Ascending aorta (tissue), 2 donors: ENCODE measurements at regions of chr7 and their contacts with region 1.

Region 1: GRCh38 chr7:70693686-70694360 is 438.1 kb upstream of the GALNT17 start:
- DNase-seq: peak in 1 of 2 donors; percentile 88
- H3K4me3 ChIP-seq: peak overlapping the region; percentile 92 to 98
- H3K27ac ChIP-seq: peak overlapping the region; percentile 77 to 97
- H3K4me1 ChIP-seq: peaks cover 5 to 12% of the 10 kb centered on the region in 2 donors
- H3K27me3 ChIP-seq: no peaks in the 10 kb centered on the region
- CTCF ChIP-seq: peak in 1 of 3 experiments; percentile 15

Region 2: DNA sequence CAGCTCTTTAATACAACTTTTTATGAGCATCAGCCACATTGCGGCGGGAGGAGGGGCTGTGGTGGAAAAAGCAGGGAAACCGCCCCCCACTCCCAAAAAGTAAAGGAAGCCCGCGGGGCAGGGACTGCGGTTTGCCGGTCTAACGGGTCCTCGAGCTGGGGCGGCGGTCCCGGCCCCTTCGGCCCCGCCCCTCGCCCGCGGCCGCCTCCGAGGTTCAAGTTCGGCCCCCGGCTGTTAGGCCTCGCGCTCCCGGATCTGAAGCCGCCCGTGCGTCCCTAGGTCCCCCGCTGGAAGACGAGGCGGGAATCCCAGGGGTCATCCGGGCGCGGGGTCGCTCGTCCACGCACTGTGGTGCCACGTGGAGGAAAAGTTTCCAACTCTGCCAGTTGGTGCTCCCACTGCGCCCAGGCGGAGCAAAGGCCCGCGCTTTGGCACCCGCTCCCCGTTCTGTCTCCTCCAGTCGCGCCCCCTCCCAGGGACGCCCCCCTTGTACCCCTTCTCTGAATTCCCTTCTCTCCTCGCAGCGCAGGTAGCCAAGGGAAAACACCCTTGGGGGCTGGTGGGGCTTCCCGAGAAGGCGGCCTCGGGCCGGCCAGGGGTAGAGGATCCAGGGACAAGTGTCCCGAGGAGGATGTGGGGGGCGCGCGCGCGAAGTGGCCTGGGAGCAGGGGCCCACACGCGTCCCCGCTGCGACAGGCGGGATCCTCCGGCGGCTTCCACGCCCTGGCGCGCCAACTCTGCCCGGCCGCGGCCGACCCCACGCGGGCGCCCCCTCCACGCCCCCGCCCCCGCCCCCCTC is 1096.3 kb before region 1 on chr7:
- intact Hi-C with region 1: loop called (anchors 2 kb)
- DNase-seq: peak in 1 of 2 donors; percentile 75
- H3K4me3 ChIP-seq: peak overlapping the region; percentile 80 to 85
- H3K27ac ChIP-seq: peak overlapping the region; percentile 84 to 93
- H3K4me1 ChIP-seq: peaks cover 9 to 13% of the 10 kb centered on the region in 2 donors
- H3K27me3 ChIP-seq: no peaks in the 10 kb centered on the region
- CTCF ChIP-seq: no peak

Region 3: GRCh38 chr7:70092314-70093204 is 601.3 kb before region 1 on chr7:
- intact Hi-C with region 1: loop called (anchors 10 kb)
- DNase-seq: no peak
- H3K4me3 ChIP-seq: no peak overlapping the region
- H3K27ac ChIP-seq: no peak overlapping the region
- H3K4me1 ChIP-seq: no peaks in the 10 kb centered on the region
- H3K27me3 ChIP-seq: no peaks in the 10 kb centered on the region
- CTCF ChIP-seq: no peak

Region 4: DNA sequence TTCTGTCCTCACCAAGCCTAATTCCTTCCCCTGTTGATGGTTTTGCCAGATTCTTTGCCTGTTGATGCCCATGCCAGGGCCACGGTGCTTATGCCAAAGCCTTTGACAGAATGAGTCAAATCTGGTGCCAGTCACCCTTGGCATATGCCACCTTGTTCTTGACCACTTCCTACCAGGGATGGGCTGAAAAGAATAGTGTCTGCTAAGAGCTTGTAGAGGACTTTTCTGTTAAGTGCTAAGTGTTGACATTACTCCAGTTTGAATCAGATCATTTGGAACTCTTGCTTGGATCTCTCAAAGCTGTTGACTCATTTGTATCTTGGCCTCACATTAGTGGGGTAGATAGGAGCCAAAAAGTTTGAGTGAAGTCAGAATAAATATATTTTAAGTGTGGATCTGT is 434.3 kb before region 1 on chr7:
- intact Hi-C with region 1: loop called (anchors 10 kb)
- DNase-seq: peak in 1 of 2 donors; percentile 65
- H3K4me3 ChIP-seq: no peak overlapping the region
- H3K27ac ChIP-seq: peak overlapping the region in 1 of 2 donors; percentile 56
- H3K4me1 ChIP-seq: peaks cover 3 to 4% of the 10 kb centered on the region in 2 donors
- H3K27me3 ChIP-seq: no peaks in the 10 kb centered on the region
- CTCF ChIP-seq: no peak

Region 5: GRCh38 chr7:70392256-70392876 is 301.5 kb before region 1 on chr7:
- intact Hi-C with region 1: loop called (anchors 2 kb)
- DNase-seq: no peak
- H3K4me3 ChIP-seq: peak overlapping the region in 1 of 2 donors; percentile 13
- H3K27ac ChIP-seq: peak overlapping the region; percentile 88 to 89
- H3K4me1 ChIP-seq: peaks cover 3 to 47% of the 10 kb centered on the region in 2 donors
- H3K27me3 ChIP-seq: no peaks in the 10 kb centered on the region
- CTCF ChIP-seq: no peak

Region 6: DNA sequence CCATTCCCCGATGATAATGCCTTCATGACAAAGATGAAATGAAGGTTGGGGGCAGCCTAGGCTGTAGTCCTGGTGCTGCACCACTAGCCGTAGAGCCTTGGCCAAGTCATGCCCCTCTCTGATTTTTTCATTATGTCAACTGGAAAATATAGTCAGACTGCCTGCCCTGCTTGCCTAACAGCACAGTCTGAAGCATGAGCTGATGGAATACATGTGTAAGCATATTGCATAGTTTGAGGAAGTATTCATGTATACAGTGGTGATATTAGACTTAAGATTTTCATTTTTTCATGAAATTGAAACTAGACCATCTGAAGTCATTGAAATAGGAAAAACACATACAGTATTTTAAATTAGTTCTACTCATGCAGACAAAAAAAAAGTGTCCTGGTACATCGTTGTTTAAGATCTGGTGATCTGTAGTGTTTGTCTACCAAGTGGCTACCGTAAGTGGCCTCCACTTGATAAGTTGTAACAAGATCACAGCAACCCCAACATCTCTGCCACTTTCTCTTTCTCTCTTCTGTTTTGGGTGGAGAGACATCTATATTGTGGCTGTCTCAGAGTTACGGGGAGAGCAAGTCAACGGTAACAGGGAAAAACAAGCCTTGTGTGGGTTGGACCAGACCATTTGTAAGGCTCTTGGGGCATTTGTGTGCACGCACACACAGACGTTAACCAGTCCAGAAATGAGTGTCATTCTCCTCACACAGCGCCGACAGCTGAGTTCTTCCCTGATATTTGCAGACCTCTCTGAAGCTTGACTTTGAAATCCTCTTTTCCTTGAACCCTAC is 278.4 kb before region 1 on chr7:
- intact Hi-C with region 1: no loop called
- DNase-seq: no peak
- H3K4me3 ChIP-seq: no peak overlapping the region
- H3K27ac ChIP-seq: no peak overlapping the region
- H3K4me1 ChIP-seq: no peaks in the 10 kb centered on the region
- H3K27me3 ChIP-seq: no peaks in the 10 kb centered on the region
- CTCF ChIP-seq: no peak

Region 7: GRCh38 chr7:70728872-70729552 is 35.2 kb after region 1 on chr7:
- intact Hi-C with region 1: no loop called
- DNase-seq: no peak
- H3K4me3 ChIP-seq: no peak overlapping the region
- H3K27ac ChIP-seq: no peak overlapping the region
- H3K4me1 ChIP-seq: peaks cover 0 to 2% of the 10 kb centered on the region in 2 donors
- H3K27me3 ChIP-seq: no peaks in the 10 kb centered on the region
- CTCF ChIP-seq: no peak

Region 8: GRCh38 chr7:71042564-71042963 is 348.7 kb after region 1 on chr7:
- intact Hi-C with region 1: no loop called
- DNase-seq: no peak
- H3K4me3 ChIP-seq: no peak overlapping the region
- H3K27ac ChIP-seq: no peak overlapping the region
- H3K4me1 ChIP-seq: no peaks in the 10 kb centered on the region
- H3K27me3 ChIP-seq: no peaks in the 10 kb centered on the region
- CTCF ChIP-seq: no peak

Region 9: DNA sequence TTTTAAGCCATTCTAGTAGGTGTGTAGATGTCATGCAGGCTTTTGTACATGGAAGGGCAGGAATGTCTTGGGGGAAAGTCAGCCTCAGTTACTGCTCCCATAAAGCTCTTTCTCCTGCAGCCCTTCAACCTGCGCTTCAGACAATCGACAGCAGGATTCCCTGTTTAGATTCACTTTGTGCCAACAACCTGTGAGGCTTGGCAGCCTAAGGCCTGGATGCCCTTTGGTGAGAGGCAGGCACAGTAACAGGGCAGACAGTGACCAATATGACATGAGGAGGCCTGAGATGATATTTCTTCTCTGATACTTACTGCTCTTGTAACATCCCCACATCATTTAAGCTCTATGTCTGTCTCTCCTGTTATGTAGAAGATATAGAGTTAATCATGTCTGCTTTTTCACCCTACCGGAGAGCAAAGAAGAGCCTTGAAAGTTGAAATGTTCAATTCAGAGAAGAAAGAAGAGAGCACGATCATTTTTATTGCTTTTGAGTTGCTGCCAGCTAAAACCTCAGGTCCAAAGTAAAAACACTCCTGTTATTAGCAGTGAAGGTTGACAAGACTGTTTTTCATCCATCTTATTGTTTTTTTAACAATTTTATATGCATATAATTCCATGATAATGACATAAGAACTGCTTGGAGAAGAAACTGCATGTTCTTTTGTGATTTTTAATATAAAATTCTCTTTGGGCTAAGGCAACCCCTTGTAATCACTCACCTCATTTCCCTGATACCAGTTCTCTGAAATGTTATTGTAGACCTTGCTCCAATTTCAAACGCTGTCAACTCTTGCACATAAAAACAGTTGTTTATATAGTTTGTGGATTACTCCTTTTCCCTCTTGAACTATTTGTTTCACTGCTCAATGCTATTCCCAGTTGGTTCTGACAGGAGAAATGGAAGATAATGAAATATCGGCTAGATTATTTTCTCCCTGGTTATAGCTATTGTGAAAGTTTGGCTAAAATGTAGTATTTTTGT is 579.0 kb after region 1 on chr7:
- intact Hi-C with region 1: loop called (anchors 10 kb)
- DNase-seq: no peak
- H3K4me3 ChIP-seq: no peak overlapping the region
- H3K27ac ChIP-seq: peak overlapping the region; percentile 73 to 75
- H3K4me1 ChIP-seq: peaks cover 0 to 27% of the 10 kb centered on the region in 2 donors
- H3K27me3 ChIP-seq: no peaks in the 10 kb centered on the region
- CTCF ChIP-seq: no peak